CD8-positive, alpha-beta memory T cell (primary cell): ENCODE measurements at regions of chr5 and their contacts with region 1.

Region 1: DNA sequence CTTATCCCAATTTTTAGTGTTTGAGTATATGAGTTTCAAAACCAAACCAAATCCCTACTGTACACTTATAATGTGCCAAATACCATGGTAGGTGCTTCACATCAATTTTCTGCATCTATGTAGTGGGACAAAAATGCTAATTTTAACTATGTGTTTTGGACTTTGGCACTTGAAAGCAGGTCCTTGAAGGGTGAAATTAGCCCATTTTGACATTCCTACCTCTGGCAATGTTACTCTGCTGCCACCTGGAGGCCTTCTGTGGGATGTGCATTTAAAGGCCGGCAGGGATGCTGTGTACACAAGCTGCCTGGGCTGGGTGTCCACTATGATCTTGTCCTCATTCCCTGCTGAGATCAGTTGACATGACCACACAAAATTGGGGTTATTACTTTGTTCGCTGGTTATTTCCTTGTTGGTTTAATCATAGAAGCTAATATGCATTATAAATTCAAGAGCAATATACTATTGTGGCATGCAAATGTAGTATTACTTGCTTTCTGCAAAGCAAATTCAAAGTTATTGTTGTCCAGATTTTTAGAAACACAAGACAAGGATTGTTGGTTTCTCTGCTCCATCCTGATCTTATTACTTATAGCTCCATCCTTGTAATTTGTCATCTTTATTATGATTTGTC is 166.8 kb downstream of the ARHGEF28 start:
- DNase-seq: peak; percentile 35 to 74 (median 41)
- H3K4me3 ChIP-seq: no peak overlapping the region
- H3K4me3 Mint-ChIP-seq: no peak overlapping the region
- H3K27ac ChIP-seq: no peak overlapping the region
- H3K27ac Mint-ChIP-seq: peak overlapping the region in 1 of 8 donors; percentile 43
- H3K4me1 ChIP-seq: no peaks in the 10 kb centered on the region
- H3K4me1 Mint-ChIP-seq: peaks cover 0 to 3% (median 0%) of the 10 kb centered on the region in 3 donors
- H3K27me3 ChIP-seq: no peaks in the 10 kb centered on the region
- H3K27me3 Mint-ChIP-seq: peaks cover 0 to 14% of the 10 kb centered on the region in 2 donors

Region 2: DNA sequence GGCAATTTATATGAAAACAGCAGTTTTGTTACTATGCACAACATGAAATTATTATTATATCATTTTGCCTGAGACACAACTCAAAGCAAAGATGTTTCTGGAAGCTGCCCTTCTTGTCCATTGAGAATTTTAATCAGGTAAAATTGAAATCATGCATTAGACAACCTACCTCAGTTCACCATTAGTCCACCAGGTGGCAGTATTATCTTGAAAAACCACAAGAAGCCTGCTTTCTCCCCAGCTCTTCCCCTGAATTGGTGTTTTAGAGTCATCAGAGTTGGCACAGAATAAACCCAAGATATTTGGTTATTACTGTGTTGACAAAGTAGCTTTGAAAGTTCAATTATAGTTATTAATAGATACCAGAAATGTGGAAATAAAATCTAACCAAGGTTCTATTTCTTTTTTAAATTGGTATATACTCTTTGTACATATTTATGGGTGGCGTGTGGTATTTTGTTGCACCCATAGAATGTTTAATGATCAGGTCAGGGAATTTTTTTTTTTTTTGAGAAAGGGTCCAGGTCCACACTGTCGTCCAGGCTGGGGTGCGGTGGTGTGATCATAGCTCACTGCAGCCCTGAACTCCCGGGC is 201.6 kb before region 1 on chr5:
- CTCF ChIA-PET with region 1: interaction called, 33 read pairs
- POLR2A ChIA-PET with region 1: no interaction called
- DNase-seq: peak; percentile 8 to 54 (median 47)
- H3K4me3 ChIP-seq: no peak overlapping the region
- H3K4me3 Mint-ChIP-seq: no peak overlapping the region
- H3K27ac ChIP-seq: no peak overlapping the region
- H3K27ac Mint-ChIP-seq: no peak overlapping the region
- H3K4me1 ChIP-seq: no peaks in the 10 kb centered on the region
- H3K4me1 Mint-ChIP-seq: no peaks in the 10 kb centered on the region
- H3K27me3 ChIP-seq: no peaks in the 10 kb centered on the region
- H3K27me3 Mint-ChIP-seq: peaks cover 0 to 2% of the 10 kb centered on the region in 2 donors

Region 3: GRCh38 chr5:73733219-73733618 is 59.6 kb before region 1 on chr5:
- CTCF ChIA-PET with region 1: no interaction called
- POLR2A ChIA-PET with region 1: no interaction called
- DNase-seq: no peak
- H3K4me3 ChIP-seq: no peak overlapping the region
- H3K4me3 Mint-ChIP-seq: no peak overlapping the region
- H3K27ac ChIP-seq: no peak overlapping the region
- H3K27ac Mint-ChIP-seq: no peak overlapping the region
- H3K4me1 ChIP-seq: no peaks in the 10 kb centered on the region
- H3K4me1 Mint-ChIP-seq: no peaks in the 10 kb centered on the region
- H3K27me3 ChIP-seq: no peaks in the 10 kb centered on the region
- H3K27me3 Mint-ChIP-seq: peaks cover 2 to 5% of the 10 kb centered on the region in 2 donors

Region 4: DNA sequence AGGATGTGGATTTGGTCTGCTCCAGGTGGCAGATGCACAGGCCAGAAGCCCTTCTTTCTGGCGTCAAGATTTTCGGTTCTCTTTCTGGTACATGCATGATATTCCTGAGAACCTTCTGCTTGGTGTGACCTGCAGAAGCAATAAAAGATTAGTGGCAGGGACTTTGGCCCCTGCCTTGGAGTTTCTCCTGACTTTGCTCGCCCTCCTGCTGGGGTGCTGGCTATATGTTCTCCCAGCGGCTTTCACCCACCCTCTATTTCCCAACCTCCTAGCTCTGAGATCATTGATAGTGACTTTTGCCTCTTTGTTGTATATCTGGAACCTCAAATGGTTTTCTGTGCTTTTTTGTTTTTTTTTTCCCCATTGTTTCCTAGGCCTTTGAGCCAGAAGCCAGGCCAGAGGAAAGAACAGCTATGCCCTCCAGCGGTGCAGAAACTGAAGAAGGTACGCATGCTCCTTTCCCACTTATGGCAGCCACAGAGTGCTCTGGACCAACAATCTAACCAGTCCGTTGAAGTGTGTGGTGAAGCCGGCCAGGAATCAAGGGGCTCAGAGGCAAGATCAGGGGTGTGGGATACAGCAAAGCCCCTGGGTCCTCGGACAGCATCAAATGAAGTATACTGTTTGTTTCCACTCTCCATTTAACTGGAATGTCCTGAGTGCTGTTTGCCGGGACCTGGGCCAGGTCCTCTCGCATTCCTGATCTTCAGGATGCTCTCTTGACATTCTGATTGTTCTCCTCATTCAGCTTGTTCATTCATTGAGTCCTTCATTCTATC is 12.3 kb before region 1 on chr5:
- CTCF ChIA-PET with region 1: interaction called, 10 read pairs
- POLR2A ChIA-PET with region 1: no interaction called
- DNase-seq: no peak
- H3K4me3 ChIP-seq: no peak overlapping the region
- H3K4me3 Mint-ChIP-seq: no peak overlapping the region
- H3K27ac ChIP-seq: no peak overlapping the region
- H3K27ac Mint-ChIP-seq: peak overlapping the region in 1 of 8 donors; percentile 12
- H3K4me1 ChIP-seq: no peaks in the 10 kb centered on the region
- H3K4me1 Mint-ChIP-seq: no peaks in the 10 kb centered on the region
- H3K27me3 ChIP-seq: no peaks in the 10 kb centered on the region
- H3K27me3 Mint-ChIP-seq: peaks cover 0 to 13% of the 10 kb centered on the region in 2 donors

Region 5: DNA sequence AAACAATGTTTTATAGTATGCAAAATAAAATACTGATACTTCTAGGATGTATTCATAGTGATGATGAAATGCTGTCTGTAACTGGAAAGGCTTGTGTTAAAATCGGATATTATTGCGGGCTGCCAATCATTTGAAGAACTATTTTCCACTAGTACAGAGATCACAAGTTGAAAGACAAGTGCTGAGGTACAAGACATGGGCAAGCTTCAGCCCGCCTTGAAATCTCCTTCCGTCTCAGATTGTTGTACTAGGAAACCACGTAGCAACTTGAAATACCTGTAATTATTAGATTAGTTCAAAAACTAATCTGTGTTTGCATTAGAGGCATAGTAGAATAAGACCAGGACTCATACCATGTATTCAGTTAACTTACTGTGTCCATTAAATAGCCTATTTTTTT is 51.4 kb after region 1 on chr5:
- CTCF ChIA-PET with region 1: no interaction called
- POLR2A ChIA-PET with region 1: no interaction called
- DNase-seq: no peak
- H3K4me3 ChIP-seq: no peak overlapping the region
- H3K4me3 Mint-ChIP-seq: no peak overlapping the region
- H3K27ac ChIP-seq: no peak overlapping the region
- H3K27ac Mint-ChIP-seq: no peak overlapping the region
- H3K4me1 ChIP-seq: no peaks in the 10 kb centered on the region
- H3K4me1 Mint-ChIP-seq: no peaks in the 10 kb centered on the region
- H3K27me3 ChIP-seq: no peaks in the 10 kb centered on the region
- H3K27me3 Mint-ChIP-seq: peaks cover 4 to 14% of the 10 kb centered on the region in 2 donors